Tibial artery (tissue), 4 donors: ENCODE measurements at regions of chr2 and their contacts with region 1.

Region 1: DNA sequence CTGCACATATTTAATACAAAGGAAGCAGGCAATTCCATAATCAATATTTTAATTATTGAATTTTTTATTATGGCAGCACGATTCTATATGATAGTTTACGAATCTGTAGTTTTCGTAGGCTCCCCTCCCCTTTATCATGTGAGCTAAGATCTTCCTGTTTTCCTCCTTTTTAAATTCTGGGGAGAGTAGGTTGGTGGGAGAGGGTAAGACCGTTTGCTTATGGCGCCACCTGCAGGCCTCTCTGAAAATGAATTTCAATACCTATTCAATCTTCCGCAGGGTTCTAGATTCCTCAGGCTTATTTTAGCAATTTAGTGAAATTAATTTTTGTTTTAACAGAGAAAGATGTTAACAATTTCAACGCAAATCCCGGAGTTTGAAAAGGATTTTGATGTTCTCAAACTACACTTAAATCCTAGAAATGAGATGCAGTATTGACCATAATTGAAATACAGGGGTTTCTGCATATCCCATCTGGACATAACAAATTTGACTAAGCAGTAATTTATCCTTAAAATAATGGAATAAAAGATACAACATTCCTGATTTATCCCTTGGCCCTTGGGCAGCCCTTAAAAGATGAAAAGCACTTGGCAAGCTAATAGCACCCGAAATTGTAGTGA is 12.8 kb upstream of the GBX2 start:
- DNase-seq: peak in 1 of 2 donors; percentile 67
- H3K4me3 ChIP-seq: no peak overlapping the region
- H3K27ac ChIP-seq: no peak overlapping the region
- H3K4me1 ChIP-seq: peaks cover 0 to 27% (median 23%) of the 10 kb centered on the region in 4 donors
- H3K27me3 ChIP-seq: peaks cover 0 to 53% of the 10 kb centered on the region in 2 donors
- CTCF ChIP-seq: peak; percentile 55 to 62

Region 2: DNA sequence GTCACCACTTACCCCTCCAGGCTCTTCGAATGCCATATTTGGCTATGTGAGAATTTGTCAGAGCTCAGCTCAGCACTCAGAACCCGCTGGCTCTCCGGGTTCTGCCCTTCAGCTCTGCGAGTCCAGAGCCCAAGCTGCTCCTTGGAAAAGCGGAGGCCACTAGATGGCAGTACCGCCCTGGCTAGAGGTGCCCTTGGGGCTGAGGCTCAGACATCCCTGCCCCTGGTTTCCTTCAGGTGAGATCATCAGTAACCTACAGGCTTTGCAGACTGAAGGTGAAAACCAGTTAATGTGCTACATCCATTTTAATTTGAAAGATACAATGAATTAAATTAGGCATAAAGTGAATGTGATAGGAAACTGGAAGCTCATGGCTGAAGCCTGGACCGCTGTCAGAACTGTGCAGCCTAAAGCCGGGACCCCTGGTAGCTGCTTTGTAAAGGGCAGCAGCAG is 401.5 kb before region 1 on chr2:
- intact Hi-C with region 1: loop called (anchors 2 kb)
- DNase-seq: peak in 1 of 2 donors; percentile 55
- H3K4me3 ChIP-seq: no peak overlapping the region
- H3K27ac ChIP-seq: no peak overlapping the region
- H3K4me1 ChIP-seq: no peaks in the 10 kb centered on the region
- H3K27me3 ChIP-seq: no peaks in the 10 kb centered on the region
- CTCF ChIP-seq: peak; percentile 51 to 78

Region 3: GRCh38 chr2:236286873-236287545 is 106.1 kb after region 1 on chr2:
- intact Hi-C with region 1: no loop called
- DNase-seq: no peak
- H3K4me3 ChIP-seq: no peak overlapping the region
- H3K27ac ChIP-seq: no peak overlapping the region
- H3K4me1 ChIP-seq: no peaks in the 10 kb centered on the region
- H3K27me3 ChIP-seq: peaks cover 0 to 5% of the 10 kb centered on the region in 2 donors
- CTCF ChIP-seq: no peak

Region 4: DNA sequence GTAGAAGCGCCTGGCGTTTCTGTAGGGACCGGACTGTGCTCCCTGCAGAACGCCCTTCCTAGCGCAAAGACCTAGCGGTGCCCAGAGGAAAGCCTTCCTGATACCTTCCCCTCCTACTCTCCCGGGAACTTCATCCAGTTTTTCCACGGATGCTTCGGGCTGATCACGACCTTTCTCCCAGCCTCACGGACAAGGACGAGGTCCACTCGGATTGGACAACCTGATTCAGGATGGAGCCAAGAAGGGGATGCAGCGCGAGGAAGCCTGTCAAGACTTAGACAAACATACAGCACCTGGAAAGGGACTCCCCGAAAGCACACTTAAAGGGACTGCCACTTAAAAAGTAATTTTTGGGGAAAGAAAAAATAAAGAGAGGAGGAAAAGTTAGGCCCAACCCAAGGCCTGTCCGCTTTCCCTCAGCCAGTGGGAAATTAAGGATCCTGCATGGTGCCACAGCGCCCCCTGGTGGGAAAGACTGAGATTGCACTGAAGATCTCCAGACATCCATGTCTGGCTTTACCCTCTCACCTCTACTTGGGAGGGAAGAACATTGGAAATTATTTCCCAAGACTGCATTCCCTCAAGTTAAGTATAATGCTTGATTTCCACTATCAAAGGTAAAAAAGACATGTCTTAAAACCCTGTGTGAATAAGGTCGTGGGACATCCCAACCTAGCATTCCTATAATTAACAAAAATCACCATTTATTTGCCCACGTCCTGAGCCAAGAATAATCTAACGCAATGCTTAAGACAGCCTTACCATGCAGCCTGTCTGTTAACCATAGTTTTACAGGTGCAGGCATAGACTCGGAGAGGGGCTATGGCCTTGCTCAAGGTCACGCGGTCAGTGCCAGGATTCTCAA is 891.4 kb after region 1 on chr2:
- intact Hi-C with region 1: loop called (anchors 5 kb)
- DNase-seq: peak; percentile 81 to 84
- H3K4me3 ChIP-seq: no peak overlapping the region
- H3K27ac ChIP-seq: no peak overlapping the region
- H3K4me1 ChIP-seq: no peaks in the 10 kb centered on the region
- H3K27me3 ChIP-seq: no peaks in the 10 kb centered on the region
- CTCF ChIP-seq: peak; percentile 87 to 98